Right ventricle myocardium superior (tissue), 1 donor: ENCODE measurements at regions of chr15 and their contacts with region 1.

Region 1: GRCh38 chr15:38683382-38684242 is 119.0 kb upstream of the RASGRP1 start:
- DNase-seq: peak; percentile 47
- ATAC-seq: peak; percentile 81

Region 2: GRCh38 chr15:38563723-38564519 is 119.7 kb before region 1 on chr15:
- intact Hi-C with region 1: loop called (anchors 10 kb)
- DNase-seq: peak; percentile 80
- ATAC-seq: peak; percentile 96

Region 3: GRCh38 chr15:38602901-38603670 is 80.5 kb before region 1 on chr15:
- intact Hi-C with region 1: no loop called
- DNase-seq: no peak
- ATAC-seq: no peak